HCT116 (cell line): ENCODE measurements at regions of chr5 and their contacts with region 1.

Region 1: DNA sequence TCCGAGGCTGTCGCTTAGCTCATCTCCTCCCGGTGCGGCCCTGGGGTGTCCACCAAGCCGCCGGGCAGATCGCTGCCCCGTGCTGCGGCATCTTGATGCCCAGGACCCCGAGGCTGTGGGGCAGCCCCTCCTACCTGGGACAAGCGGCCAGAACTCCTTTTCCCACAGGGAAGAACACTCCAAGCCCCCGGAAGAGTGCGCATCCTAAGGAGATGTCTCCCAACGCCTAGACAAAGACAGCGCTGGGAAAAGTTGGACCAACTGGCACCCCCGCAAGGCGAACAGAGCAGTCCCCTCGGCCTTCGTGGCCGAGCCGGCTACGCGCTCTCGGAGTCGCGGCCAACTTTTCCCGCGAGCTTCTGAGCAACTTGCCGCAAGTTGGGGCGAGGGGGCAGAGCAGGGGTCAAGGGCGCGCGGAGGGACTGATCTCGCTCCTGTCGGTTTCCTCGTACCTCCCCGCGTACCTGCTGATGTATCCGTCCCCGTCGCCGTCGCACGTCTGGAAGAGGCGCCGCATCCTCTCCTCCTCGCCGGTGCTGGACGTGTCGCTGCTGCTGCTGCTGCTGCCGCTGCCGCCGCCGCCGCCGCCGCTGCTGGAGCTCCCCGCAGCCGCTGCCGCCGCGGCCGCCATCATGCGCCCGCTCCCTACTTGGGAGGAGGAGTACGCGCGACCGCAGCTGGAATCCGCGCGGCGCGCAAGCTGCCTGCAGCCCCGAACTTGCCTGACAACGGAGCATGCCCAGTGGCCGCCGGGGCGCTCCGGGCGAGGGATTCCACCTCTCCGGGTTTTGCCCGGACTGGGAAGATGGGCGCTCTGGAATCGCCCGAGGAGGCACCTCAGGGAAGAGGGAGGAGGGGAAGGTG is at the start of gene MCC:
- DNase-seq: peak; percentile 73
- ATAC-seq: peak; percentile 74
- H3K4me3 ChIP-seq: peak within 1 kb of the TSS; percentile 72 to 74
- H3K27ac ChIP-seq: peak within 1 kb of the TSS; percentile 36
- H3K4me1 ChIP-seq: peaks cover 12 to 16% of the 10 kb centered on the region in 2 experiments
- H3K27me3 ChIP-seq: no peaks in the 10 kb centered on the region
- CTCF ChIP-seq: no peak
- POLR2A ChIP-seq: no peak
- RAD21 ChIP-seq: no peak
- total RNA-seq, gene MCC: 20.1 TPM

Region 2: DNA sequence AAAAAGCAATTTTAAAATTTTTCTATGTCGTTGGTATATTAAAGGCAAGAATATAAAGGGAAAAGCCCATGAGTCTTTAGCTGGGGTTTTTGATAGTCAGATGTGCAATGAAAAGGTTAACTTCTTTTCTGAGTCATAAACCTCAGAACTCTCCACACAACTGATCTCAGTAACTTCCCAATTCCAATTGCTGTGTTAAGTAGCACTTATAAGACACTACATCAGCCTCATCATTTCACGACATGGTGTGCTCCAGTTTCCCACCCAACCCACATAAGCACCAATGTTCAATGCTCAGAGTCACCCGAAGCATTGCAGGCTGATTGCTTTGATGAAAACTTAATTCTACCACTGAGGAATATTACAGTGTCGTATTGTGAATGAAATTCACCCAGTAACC is 209.0 kb before region 1 on chr5:
- CTCF ChIA-PET with region 1: no interaction called
- POLR2A ChIA-PET with region 1: no interaction called
- RAD21 ChIA-PET with region 1: no interaction called
- intact Hi-C with region 1: no loop called
- DNase-seq: no peak
- ATAC-seq: no peak
- H3K4me3 ChIP-seq: no peak overlapping the region
- H3K27ac ChIP-seq: no peak overlapping the region
- H3K4me1 ChIP-seq: peaks cover 0 to 3% of the 10 kb centered on the region in 2 experiments; a peak in 1 of 4 replicates
- H3K27me3 ChIP-seq: no peaks in the 10 kb centered on the region
- CTCF ChIP-seq: no peak
- POLR2A ChIP-seq: no peak
- RAD21 ChIP-seq: no peak

Region 3: DNA sequence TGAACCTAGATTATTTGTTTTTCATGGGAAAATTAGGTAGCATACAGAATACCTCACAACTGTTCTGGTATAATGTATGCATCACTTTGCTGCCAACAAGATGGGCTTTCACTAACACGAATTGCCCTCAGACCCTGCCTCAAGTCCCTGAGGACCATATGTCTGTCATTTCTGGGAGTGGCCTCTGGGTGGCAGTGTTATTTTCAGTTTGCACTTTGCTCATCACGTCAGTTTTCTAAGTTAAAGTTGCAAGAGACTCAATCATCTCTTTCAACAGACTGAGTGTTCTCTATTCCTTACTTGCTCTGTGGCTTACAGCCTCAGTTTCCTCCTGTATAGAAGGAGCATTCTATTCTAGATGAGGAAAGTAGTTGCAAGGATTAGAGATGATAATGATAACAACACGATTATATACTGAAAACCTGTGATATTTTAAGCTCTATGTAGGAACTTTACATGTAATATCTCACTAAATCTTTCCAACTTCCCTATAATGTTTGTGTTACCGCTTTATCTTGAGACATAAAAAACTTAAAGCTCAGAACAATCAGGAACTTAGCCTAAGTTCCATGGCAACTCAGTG is 109.0 kb before region 1 on chr5:
- CTCF ChIA-PET with region 1: no interaction called
- POLR2A ChIA-PET with region 1: no interaction called
- RAD21 ChIA-PET with region 1: no interaction called
- intact Hi-C with region 1: loop called (anchors 5 kb)
- DNase-seq: peak; percentile 50
- ATAC-seq: peak; percentile 81
- H3K4me3 ChIP-seq: no peak overlapping the region
- H3K27ac ChIP-seq: no peak overlapping the region
- H3K4me1 ChIP-seq: no peaks in the 10 kb centered on the region
- H3K27me3 ChIP-seq: no peaks in the 10 kb centered on the region
- CTCF ChIP-seq: peak; percentile 63 to 80 (median 75)
- POLR2A ChIP-seq: no peak
- RAD21 ChIP-seq: peak; percentile 80

Region 4: GRCh38 chr5:113507601-113508000 is 19.6 kb after region 1 on chr5:
- CTCF ChIA-PET with region 1: no interaction called
- POLR2A ChIA-PET with region 1: no interaction called
- RAD21 ChIA-PET with region 1: no interaction called
- intact Hi-C with region 1: no loop called
- DNase-seq: no peak
- ATAC-seq: no peak
- H3K4me3 ChIP-seq: no peak overlapping the region
- H3K27ac ChIP-seq: no peak overlapping the region
- H3K4me1 ChIP-seq: peaks cover 0 to 2% of the 10 kb centered on the region in 2 experiments; a peak in 1 of 4 replicates
- H3K27me3 ChIP-seq: no peaks in the 10 kb centered on the region
- CTCF ChIP-seq: no peak
- POLR2A ChIP-seq: no peak
- RAD21 ChIP-seq: no peak